H1 (cell line): ENCODE measurements at regions of chr3 and their contacts with region 1.

Region 1: DNA sequence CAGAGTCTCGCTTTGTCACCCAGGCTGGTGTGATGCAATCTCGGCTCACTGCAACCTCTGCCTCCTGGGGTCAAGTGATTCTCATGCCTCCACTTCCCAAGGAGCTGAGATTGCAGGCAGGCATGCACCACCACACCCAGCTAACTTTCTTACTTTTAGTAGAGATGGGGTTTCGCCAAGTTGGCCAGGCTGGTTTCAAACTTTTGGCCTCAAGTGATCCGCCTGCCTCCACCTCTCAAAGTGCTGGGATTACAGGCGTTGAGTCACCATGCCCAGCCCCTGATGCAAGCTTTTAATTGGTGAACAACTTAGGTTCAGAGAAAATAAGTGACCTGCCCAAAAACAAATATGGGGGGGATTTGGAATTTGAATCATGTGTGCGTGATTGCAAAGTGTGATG is 246.2 kb downstream of the LRTM1 start:
- DNase-seq: no peak
- H3K4me3 ChIP-seq: no peak overlapping the region
- H3K27ac ChIP-seq: no peak overlapping the region
- H3K4me1 ChIP-seq: peaks cover 0 to 5% (median 3%) of the 10 kb centered on the region in 4 experiments; a peak in 4 of 7 replicates
- H3K27me3 ChIP-seq: no peaks in the 10 kb centered on the region
- CTCF ChIP-seq: no peak
- EP300 ChIP-seq: no peak
- POLR2A ChIP-seq: no peak
- RAD21 ChIP-seq: no peak

Region 2: DNA sequence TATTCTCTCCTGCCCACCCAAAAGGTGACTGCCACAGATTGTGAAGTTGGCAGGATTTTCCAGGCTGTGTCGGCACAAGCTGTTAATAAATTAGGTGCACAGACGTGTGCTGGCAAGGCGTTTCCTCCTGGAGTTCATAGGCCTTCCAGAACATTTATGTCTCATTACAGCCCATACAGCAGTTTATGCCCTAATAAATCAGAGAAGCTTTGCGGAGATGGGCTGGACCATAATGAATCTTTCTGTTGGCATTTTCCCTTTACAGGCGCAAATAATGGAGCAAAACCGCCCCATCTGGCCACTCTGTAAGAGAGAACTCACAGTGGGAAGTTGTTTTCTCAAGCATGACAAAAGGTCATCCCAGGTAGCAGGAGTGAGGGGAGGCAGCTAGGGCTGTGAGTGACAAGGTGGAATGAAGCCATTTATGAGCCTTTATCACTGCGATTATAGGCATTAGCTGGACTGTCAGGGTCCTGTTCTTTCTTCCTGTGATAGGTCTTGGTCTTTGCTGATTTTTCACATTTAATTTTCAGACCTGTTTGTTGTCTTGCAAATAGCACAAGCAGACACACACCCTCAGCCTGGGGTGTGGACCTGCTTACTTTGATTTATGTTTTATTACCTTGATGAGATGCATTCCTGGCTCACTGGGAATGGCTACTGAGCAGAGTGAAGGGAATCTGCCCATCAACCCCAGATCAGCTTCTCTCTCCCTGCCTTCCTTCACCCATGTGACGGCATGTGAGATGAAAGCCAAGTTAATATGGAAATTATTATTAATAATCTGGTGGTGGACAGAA is 11.3 kb before region 1 on chr3:
- CTCF ChIA-PET with region 1: interaction called, 5 read pairs
- POLR2A ChIA-PET with region 1: interaction called, 12 read pairs
- DNase-seq: peak in 1 of 2 experiments; percentile 54
- H3K4me3 ChIP-seq: peak overlapping the region in 1 of 4 experiments; percentile 16; a peak in 1 of 8 replicates
- H3K27ac ChIP-seq: no peak overlapping the region
- H3K4me1 ChIP-seq: peaks cover 3 to 23% (median 13%) of the 10 kb centered on the region in 4 experiments; a peak in 6 of 7 replicates
- H3K27me3 ChIP-seq: no peaks in the 10 kb centered on the region
- CTCF ChIP-seq: peak in 1 of 3 experiments; percentile 31; a peak in 1 of 4 replicates
- EP300 ChIP-seq: no peak
- POLR2A ChIP-seq: no peak
- RAD21 ChIP-seq: peak; percentile 27 to 32; a peak in 3 of 4 replicates

Region 3: GRCh38 chr3:54773271-54773670 is 91.6 kb after region 1 on chr3:
- CTCF ChIA-PET with region 1: no interaction called
- POLR2A ChIA-PET with region 1: no interaction called
- DNase-seq: no peak
- H3K4me3 ChIP-seq: no peak overlapping the region
- H3K27ac ChIP-seq: no peak overlapping the region; the same call in 1 of the 2 replicates
- H3K4me1 ChIP-seq: peaks cover 0 to 7% (median 5%) of the 10 kb centered on the region in 4 experiments; a peak in 3 of 7 replicates
- H3K27me3 ChIP-seq: no peaks in the 10 kb centered on the region
- CTCF ChIP-seq: no peak
- EP300 ChIP-seq: no peak
- POLR2A ChIP-seq: no peak
- RAD21 ChIP-seq: no peak